ENCODE measurements at regions of chr14 and their contacts with region 1.

Region 1: GRCh38 chr14:100078991-100079725 is 13.9 kb downstream of the EVL start:
- DNase-seq: peak; percentile 91
- H3K4me3 Mint-ChIP-seq: peak overlapping the region; percentile 76
- H3K27ac Mint-ChIP-seq: peak overlapping the region; percentile 90
- H3K4me1 Mint-ChIP-seq: peaks cover 98% of the 10 kb centered on the region
- H3K27me3 Mint-ChIP-seq: no peaks in the 10 kb centered on the region

Region 2: DNA sequence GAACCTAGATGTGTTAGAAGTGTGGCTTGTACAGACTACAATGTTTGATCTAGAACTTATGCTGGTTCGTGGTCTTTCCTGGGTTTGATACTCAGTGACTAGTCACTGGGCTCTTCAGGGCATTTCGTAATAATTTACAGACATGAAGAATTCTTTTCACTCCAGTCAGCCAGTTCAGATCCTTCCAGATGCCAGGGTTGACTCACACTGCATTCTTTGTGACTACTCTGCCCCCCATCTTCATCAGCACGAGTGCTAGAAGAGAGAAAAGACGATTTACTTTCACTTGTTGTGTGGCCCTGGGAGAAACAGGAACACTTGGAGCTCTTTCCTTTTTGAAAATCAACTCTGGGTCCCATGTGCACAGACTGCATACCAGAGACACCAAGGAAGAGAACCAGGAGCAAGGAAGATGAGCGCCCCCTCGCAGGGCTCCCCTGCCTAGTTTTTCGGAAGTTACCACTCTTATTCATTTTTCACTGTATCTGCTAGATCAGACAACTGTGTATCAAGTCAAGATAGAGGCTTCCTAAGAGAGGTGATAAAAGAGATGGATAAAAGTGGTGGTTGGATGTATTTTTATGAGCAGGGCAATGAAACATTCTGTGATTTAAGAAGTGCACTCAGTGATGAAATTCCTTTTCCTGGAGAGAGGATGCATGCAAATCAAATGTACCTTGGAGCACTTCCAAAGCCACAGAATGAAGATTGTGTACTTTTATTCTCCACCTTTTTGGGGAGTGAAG is 47.4 kb before region 1 on chr14:
- CTCF ChIA-PET with region 1: no interaction called
- POLR2A ChIA-PET with region 1: no interaction called
- DNase-seq: no peak
- H3K4me3 Mint-ChIP-seq: no peak overlapping the region
- H3K27ac Mint-ChIP-seq: no peak overlapping the region
- H3K4me1 Mint-ChIP-seq: no peaks in the 10 kb centered on the region
- H3K27me3 Mint-ChIP-seq: no peaks in the 10 kb centered on the region

Region 3: DNA sequence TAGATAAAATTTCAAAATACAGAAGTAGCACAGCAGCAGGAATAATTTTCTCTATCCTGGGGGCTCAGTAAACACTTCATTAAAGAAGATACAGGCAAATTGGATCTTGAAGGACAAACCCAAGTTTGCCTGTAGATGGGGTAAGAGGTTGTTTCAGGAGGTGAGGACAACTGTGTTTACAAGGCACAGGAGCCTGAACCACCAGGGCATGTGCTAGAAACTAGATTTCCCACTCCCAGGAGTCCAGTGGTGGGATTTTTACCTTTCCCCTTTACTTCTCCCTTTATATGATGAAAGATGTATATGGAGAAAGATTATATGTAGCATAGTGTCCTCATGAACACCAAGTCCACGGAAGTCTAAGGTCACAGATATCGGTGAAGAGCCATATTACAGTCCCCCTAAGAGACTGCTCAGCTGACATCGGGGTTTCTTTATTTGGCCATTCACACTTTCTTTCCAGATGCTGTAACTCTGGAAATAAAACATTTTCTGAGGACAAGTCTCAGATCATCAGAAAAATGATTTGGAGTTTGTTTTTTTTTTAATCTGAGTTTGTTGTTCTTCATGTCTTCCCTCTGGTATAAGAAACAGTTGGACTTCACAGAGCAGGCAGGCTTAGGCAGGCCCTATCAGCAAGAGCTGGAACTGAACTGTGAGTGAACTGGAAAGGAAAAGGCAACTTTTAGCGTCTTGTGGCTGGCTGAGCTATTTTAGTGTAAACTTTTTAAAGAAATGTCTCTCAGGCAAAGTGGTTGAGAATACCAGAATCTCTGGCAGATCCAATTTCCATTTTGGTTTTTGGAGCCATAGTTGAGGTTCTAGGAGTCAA is 22.0 kb before region 1 on chr14:
- CTCF ChIA-PET with region 1: interaction called, 116 read pairs
- POLR2A ChIA-PET with region 1: interaction called, 1,586 read pairs
- DNase-seq: no peak
- H3K4me3 Mint-ChIP-seq: no peak overlapping the region
- H3K27ac Mint-ChIP-seq: no peak overlapping the region
- H3K4me1 Mint-ChIP-seq: peaks cover 51% of the 10 kb centered on the region
- H3K27me3 Mint-ChIP-seq: no peaks in the 10 kb centered on the region

Region 4: DNA sequence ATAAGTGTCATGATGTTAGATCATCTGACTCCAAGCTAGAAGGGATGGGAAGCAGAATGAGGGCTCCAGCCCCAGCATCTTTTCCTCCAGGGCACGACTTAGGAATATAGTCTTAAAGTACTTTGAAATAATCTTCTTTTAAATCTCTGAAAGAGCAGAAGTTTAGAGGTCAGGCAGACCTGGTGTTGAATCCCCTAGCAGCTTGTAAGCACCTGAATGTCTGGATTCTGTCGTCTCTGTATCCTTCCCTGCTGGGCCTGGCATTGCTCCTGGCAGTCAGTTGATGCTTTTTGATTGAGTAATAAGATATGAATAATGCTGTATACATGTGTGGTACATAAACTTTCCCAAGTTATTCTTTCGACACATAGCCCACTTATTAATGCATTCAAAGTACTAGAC is 17.4 kb after region 1 on chr14:
- CTCF ChIA-PET with region 1: interaction called, 563 read pairs
- POLR2A ChIA-PET with region 1: interaction called, 1,586 read pairs
- DNase-seq: no peak
- H3K4me3 Mint-ChIP-seq: no peak overlapping the region
- H3K27ac Mint-ChIP-seq: no peak overlapping the region
- H3K4me1 Mint-ChIP-seq: peaks cover 86% of the 10 kb centered on the region
- H3K27me3 Mint-ChIP-seq: no peaks in the 10 kb centered on the region

Region 5: DNA sequence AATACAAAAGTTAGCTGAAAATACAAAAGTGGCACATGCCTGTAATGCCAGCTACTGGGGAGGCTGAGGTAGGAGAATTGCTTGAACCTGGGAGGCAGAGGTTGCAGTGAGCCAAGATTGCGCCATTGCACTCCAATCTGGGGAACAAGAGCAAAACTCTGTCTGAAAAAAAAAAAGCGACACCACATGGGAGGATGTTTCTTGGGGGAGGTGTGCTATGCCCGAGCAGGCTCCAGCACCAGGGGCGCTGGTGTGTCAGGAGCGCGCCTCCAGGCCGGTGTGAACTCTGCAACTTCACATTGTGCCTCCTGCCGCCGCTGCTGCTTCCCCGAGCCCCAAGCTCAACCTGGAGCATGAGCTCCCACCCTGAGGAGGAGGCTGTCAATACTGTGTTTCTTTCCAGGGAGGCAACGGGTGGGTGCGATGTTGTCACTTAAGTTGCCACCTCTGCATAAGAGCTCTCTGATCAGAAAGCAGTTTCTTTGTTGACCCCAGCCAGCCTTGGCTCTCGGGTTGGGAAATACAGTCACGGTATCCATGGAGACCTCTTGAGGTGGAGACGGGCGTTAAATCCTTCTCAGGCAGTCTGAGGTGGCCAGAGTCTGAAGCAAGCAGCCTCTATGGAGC is 61.4 kb after region 1 on chr14:
- CTCF ChIA-PET with region 1: no interaction called
- POLR2A ChIA-PET with region 1: no interaction called
- DNase-seq: no peak
- H3K4me3 Mint-ChIP-seq: no peak overlapping the region
- H3K27ac Mint-ChIP-seq: peak overlapping the region; percentile 24
- H3K4me1 Mint-ChIP-seq: no peaks in the 10 kb centered on the region
- H3K27me3 Mint-ChIP-seq: no peaks in the 10 kb centered on the region

Region 6: DNA sequence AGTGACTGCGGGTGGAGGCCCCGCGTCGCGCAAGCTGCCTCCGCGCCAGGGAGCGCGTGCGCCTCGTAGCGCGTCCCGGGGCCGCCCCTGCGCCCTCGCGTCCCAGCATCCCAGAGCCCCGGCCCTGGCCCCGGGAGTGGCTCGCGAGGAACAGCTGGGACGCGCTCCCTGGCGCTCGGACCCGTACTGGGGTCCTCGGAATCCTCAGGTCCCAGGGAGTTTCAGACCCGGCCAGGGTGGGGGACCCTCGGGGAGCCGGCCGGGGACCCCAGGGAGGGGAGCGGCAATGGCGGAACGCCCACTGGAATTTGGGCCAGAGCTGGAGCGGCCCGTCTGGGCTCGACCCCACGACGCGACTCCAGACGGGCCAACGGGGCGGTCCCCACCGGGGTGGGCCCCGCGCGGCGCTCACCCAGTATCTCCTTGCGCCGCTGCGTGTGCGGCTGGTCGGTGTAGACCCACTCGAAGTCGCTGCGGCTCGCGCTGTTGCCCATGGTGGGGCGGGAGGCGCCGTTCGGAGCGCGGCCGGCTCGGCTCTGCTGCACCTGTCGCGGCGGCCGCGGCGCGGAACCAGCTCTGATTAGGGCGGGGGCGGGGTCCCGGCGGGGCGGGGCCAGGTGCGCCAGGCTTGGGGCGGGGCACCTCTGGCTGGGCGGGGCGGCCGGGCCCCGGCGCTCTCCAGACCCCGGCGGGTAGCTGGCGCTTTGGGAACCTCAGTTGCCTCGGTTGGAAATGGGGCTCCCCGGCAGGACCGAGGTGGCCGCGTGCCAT is 80.1 kb after region 1 on chr14 and contains the start of gene DEGS2:
- CTCF ChIA-PET with region 1: no interaction called
- POLR2A ChIA-PET with region 1: no interaction called
- DNase-seq: peak; percentile 52
- H3K4me3 Mint-ChIP-seq: peak within 1 kb of the TSS; percentile 39
- H3K27ac Mint-ChIP-seq: no peak within 1 kb of the TSS
- H3K4me1 Mint-ChIP-seq: peaks cover 3% of the 10 kb centered on the region
- H3K27me3 Mint-ChIP-seq: peaks cover 31% of the 10 kb centered on the region
- total RNA-seq, gene DEGS2: 0.20 to 0.25 TPM

Measured in activated CD4-positive, alpha-beta memory T cell treated with anti-CD3 and anti-CD28 coated beads, Interleukin-2, amount 10 ng/mL, durations not matched to agents 7 days and 5 days (primary cell).